HepG2 (cell line): ENCODE measurements at regions of chr9 and their contacts with region 1.

Region 1: GRCh38 chr9:127159325-127159801 is 36.9 kb upstream of the ANGPTL2 start:
- DNase-seq: peak; percentile 76
- ATAC-seq: peak; percentile 95
- H3K4me3 ChIP-seq: no peak overlapping the region
- H3K27ac ChIP-seq: no peak overlapping the region
- H3K4me1 ChIP-seq: peaks cover 34% of the 10 kb centered on the region
- H3K27me3 ChIP-seq: no peaks in the 10 kb centered on the region
- CTCF ChIP-seq: peak; percentile 79
- EP300 ChIP-seq: peak in 1 of 2 experiments; percentile 69; a peak in 2 of 4 replicates
- POLR2A ChIP-seq: no peak
- RAD21 ChIP-seq: no peak

Region 2: DNA sequence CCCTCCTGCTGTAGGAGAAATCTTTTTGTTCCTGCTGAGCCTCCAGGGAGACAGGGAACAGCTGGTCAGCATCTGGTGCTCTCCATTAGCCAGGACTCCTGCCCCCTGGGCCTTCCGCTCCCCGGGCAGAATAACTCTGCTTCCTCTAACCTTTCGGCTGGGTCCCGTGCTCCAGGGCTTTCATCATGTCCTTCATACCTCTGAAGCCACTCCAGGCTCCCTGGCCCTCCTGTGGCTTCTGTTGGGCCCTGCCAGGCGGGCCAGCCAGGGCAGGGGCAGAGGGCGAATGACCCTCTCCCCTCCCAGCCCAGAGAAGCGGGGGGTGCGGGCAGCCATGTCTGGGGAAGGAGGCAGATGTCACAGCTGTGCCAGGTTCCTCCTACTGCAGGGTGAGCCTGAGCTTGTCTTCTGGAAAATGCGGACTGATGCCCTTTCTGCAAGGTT is 627.3 kb before region 1 on chr9:
- CTCF ChIA-PET with region 1: no interaction called
- POLR2A ChIA-PET with region 1: no interaction called
- in situ Hi-C with region 1: no loop called
- intact Hi-C with region 1: no loop called
- DNase-seq: no peak
- ATAC-seq: no peak
- H3K4me3 ChIP-seq: no peak overlapping the region
- H3K27ac ChIP-seq: no peak overlapping the region
- H3K4me1 ChIP-seq: peaks cover 63% of the 10 kb centered on the region
- H3K27me3 ChIP-seq: no peaks in the 10 kb centered on the region
- CTCF ChIP-seq: no peak
- EP300 ChIP-seq: no peak
- POLR2A ChIP-seq: no peak
- RAD21 ChIP-seq: no peak

Region 3: DNA sequence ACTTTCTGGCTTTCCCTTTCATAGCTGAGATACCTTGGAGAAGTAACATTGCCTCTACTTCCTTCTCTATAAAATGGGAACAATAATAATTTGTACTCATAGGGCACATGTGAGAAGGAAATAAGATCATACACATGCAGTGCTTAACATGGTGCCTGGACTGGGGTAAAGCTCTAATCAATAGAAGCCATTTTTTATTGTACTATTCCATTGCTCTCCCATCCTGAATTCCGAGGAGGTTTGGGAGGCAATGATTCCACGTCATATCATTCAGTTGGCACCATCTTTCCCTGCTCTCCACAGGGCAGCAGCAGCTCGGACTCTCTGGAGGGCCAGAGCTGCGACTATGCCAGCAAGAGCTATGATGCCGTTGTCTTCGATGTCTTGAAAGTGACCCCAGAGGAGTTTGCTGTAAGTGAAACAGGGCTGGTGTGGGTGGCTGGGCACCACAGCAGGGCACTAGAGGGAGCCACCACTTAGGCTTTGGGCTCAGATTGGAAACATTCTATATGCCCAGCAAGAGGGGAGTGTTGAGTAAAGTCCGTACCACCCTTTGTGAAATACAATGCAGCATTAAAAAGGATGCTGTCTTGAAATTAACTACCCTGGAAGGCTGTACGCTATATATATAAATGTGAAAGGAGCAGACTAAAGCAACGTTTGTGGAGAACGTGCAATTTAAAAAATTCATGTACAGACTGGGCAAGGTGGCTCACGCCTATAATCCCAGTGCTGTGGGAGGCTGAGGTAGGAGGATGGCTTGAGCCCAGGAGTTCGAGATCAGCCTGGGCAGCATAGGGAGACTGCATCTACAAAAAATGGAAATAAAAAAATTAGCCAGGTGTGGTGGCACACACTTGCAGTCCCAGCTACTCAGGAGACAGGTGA is 193.6 kb before region 1 on chr9:
- CTCF ChIA-PET with region 1: no interaction called
- POLR2A ChIA-PET with region 1: no interaction called
- in situ Hi-C with region 1: no loop called
- intact Hi-C with region 1: loop called (anchors 1 kb)
- DNase-seq: peak; percentile 30
- ATAC-seq: peak; percentile 94
- H3K4me3 ChIP-seq: no peak overlapping the region
- H3K27ac ChIP-seq: no peak overlapping the region
- H3K4me1 ChIP-seq: no peaks in the 10 kb centered on the region
- H3K27me3 ChIP-seq: no peaks in the 10 kb centered on the region
- CTCF ChIP-seq: peak; percentile 85
- EP300 ChIP-seq: no peak
- POLR2A ChIP-seq: no peak
- RAD21 ChIP-seq: peak; percentile 73

Region 4: DNA sequence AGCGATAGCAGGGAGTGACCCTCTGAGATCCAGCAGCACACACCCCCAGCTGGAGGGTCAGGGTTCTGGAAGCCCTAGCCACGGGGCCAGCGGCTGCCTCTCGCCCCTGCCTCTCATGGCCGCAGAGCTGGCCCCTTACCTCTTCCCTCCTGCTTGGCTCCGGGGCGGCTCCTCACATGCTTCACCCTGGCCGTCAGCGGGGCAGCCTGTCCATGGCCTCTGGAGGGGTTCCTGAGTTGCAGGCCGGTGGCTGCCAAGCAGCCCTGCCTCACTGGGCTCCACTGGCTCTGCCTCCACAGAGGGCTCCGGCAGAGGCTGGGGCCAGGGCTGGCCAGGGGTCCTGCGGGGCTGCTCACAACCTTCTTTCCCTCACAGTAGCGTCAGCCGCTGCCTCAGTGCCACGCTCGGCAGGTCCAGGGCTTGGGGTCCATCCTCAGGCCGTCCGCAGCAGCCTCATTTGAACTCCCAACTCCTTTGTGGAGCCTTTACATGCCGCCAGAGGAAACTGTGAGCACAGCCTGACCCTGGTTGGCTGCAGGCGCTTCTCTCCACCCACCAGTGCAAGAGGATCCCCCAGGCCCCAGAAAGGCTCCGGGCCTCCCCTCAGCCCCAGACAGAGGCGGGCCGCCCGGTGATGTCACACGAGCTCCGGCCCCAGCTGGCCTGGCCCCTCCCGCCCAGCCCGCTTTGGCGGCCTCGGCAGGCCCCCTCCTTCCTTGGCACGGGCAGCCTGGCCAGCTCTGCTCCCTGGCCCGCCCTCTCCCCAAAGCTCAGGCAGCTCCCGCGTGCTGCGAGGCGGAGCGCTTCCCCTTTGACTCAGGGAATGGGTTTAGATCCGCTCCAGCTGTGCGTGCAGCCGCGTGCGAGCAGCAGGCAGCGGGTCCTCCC is 36.9 kb before region 1 on chr9 and contains the start of gene ANGPTL2:
- CTCF ChIA-PET with region 1: no interaction called
- POLR2A ChIA-PET with region 1: no interaction called
- in situ Hi-C with region 1: no loop called
- intact Hi-C with region 1: no loop called
- DNase-seq: peak; percentile 43
- ATAC-seq: peak; percentile 86
- H3K4me3 ChIP-seq: peak within 1 kb of the TSS; percentile 50 to 74 (median 60)
- H3K27ac ChIP-seq: peak within 1 kb of the TSS; percentile 23
- H3K4me1 ChIP-seq: peaks cover 25% of the 10 kb centered on the region
- H3K27me3 ChIP-seq: no peaks in the 10 kb centered on the region; a peak in 1 of 5 replicates
- CTCF ChIP-seq: no peak
- EP300 ChIP-seq: no peak
- POLR2A ChIP-seq: peak in 1 of 2 experiments; percentile 56; a peak in 1 of 4 replicates
- RAD21 ChIP-seq: no peak
- total RNA-seq, gene ANGPTL2: 0.35 and 0.91 TPM in 2 replicates

Region 5: DNA sequence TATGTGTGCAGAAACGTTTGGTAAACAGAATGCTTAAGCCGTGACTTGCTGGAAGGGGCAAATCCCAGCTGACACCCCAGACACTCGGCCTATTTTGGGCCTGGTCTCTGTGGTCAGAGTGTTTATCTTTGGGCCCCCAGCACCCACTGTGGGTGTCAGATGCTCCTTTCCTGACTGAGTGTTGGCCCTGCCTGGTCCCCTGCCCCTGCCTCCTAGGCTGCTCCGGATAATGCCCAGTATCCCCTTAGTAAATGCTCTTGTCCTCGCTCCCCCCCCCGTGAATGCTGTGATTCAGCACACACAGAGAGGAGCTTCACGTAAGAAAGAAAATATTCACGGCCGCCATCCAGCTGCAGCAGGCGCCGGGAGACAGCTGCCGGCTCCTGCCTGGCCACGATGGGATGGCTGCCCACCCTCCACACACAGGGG is 25.6 kb before region 1 on chr9:
- CTCF ChIA-PET with region 1: no interaction called
- POLR2A ChIA-PET with region 1: no interaction called
- in situ Hi-C with region 1: no loop called
- intact Hi-C with region 1: no loop called
- DNase-seq: no peak
- ATAC-seq: no peak; the same call in 2 of the 3 replicates
- H3K4me3 ChIP-seq: peak overlapping the region in 1 of 3 experiments; percentile 20; a peak in 1 of 6 replicates
- H3K27ac ChIP-seq: no peak overlapping the region
- H3K4me1 ChIP-seq: peaks cover 57% of the 10 kb centered on the region
- H3K27me3 ChIP-seq: no peaks in the 10 kb centered on the region; a peak in 1 of 5 replicates
- CTCF ChIP-seq: no peak
- EP300 ChIP-seq: no peak
- POLR2A ChIP-seq: no peak
- RAD21 ChIP-seq: no peak